Activated naive CD4-positive, alpha-beta T cell treated with anti-CD3 and anti-CD28 coated beads for 36 hours (primary cell): ENCODE measurements at regions of chr3 and their contacts with region 1.

Region 1: DNA sequence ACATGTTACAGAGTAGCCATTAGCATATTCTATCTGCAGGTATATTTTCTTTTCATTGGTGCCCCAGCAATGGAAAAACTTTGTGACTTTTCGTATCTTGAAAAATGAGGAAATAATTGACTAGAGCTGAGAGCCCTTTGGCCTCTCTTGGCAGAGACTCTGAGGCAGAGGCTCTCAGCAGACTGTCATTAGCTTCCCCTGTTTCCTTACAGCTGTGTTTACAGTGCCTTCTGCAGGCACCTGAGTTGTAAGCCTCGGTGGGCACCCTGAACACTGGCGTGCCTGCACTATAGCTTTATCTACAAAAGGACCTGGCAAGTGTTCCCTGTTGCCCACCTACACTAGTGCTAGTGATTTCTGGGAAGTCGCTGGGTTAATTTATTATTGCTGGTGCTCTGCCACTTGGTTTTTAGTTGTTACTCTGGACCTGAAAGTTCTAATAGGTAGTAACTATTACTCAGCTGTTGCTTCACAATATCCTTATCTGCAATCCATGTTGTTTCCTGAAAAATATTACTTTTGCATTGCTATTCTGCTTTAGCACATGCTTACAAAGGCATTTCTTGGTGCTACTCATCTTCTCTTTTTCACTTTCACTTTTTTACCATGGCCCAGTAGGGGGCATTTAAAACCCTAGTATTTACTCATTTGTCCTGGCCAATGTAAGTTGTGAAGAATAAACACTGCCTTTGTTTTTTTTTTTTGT is 7.8 kb upstream of the GPR171 start:
- DNase-seq: peak; percentile 31
- H3K4me3 Mint-ChIP-seq: peak overlapping the region; percentile 48
- H3K27ac Mint-ChIP-seq: peak overlapping the region; percentile 90
- H3K4me1 Mint-ChIP-seq: peaks cover 56% of the 10 kb centered on the region
- H3K27me3 Mint-ChIP-seq: no peaks in the 10 kb centered on the region

Region 2: DNA sequence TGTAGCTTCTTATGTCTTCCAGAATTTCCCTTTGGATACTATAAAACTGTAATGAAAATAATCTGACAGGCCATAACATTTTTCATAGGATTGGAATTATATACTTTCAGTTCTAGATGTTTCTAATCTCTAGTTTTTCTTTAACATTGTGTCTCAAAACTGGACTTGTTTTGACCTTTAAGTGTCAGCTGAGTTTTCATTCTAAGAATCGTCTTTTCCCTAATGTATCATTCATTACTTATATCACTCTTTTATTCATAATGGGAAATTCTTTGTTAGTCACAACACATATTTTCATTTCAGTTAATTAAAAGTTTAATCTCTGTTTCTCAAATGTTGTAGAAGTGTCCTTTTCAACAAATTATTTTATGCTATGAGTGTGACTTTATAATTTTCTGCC is 19.7 kb before region 1 on chr3:
- CTCF ChIA-PET with region 1: interaction called, 11 read pairs
- intact Hi-C with region 1: loop called (anchors 1 kb)
- DNase-seq: no peak
- H3K4me3 Mint-ChIP-seq: peak overlapping the region; percentile 41
- H3K27ac Mint-ChIP-seq: peak overlapping the region; percentile 93
- H3K4me1 Mint-ChIP-seq: peaks cover 68% of the 10 kb centered on the region
- H3K27me3 Mint-ChIP-seq: no peaks in the 10 kb centered on the region

Region 3: GRCh38 chr3:151196434-151196833 is 14.4 kb before region 1 on chr3:
- CTCF ChIA-PET with region 1: interaction called, 11 read pairs
- intact Hi-C with region 1: loop called (anchors 1 kb)
- DNase-seq: no peak
- H3K4me3 Mint-ChIP-seq: no peak overlapping the region
- H3K27ac Mint-ChIP-seq: peak overlapping the region; percentile 41
- H3K4me1 Mint-ChIP-seq: peaks cover 50% of the 10 kb centered on the region
- H3K27me3 Mint-ChIP-seq: no peaks in the 10 kb centered on the region